K562 (cell line): ENCODE measurements at regions of chr2 and their contacts with region 1.

Region 1: DNA sequence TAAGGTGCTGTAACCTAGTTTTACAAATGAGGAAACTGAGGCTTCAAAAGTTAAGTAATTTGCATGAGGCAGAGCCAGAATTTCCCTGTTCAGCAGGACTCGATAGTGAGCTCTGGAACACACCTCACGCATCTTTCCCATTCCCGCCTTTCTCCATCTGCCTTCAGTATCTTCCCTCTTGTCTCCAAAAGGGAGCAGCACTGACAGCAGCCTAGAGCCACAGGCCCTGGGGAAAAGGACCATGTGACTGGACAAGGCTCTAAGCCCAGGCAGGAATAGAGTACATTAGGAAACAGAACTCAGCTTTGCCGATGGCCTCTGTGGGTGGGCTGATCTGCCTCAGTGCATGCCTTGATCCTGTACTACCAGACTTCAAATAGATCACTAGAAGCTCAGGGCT is 21.5 kb downstream of the GPR155 start:
- DNase-seq: peak in 2 of 4 experiments; percentile 14 to 15
- ATAC-seq: peak; percentile 67
- H3K4me3 ChIP-seq: no peak overlapping the region
- H3K27ac ChIP-seq: no peak overlapping the region
- H3K4me1 ChIP-seq: no peaks in the 10 kb centered on the region
- H3K27me3 ChIP-seq: peaks cover 8 to 9% of the 10 kb centered on the region in 2 experiments
- CTCF ChIP-seq: peak; percentile 12 to 32 (median 15); a peak in 1 of 6 replicates
- EP300 ChIP-seq: no peak
- POLR2A ChIP-seq: no peak
- RAD21 ChIP-seq: peak; percentile 35 to 61

Region 2: GRCh38 chr2:174522553-174522952 is 57.2 kb after region 1 on chr2:
- CTCF ChIA-PET with region 1: interaction called, 11 read pairs
- POLR2A ChIA-PET with region 1: no interaction called
- in situ Hi-C with region 1: no loop called
- intact Hi-C with region 1: loop called (anchors 1 kb)
- DNase-seq: no peak
- ATAC-seq: no peak
- H3K4me3 ChIP-seq: no peak overlapping the region
- H3K27ac ChIP-seq: no peak overlapping the region
- H3K4me1 ChIP-seq: no peaks in the 10 kb centered on the region
- H3K27me3 ChIP-seq: peaks cover 18 to 22% of the 10 kb centered on the region in 2 experiments; a peak in 4 of 5 replicates
- CTCF ChIP-seq: peak in 1 of 3 experiments; percentile 55; a peak in 3 of 6 replicates
- EP300 ChIP-seq: no peak
- POLR2A ChIP-seq: no peak
- RAD21 ChIP-seq: peak; percentile 58 to 75

Region 3: DNA sequence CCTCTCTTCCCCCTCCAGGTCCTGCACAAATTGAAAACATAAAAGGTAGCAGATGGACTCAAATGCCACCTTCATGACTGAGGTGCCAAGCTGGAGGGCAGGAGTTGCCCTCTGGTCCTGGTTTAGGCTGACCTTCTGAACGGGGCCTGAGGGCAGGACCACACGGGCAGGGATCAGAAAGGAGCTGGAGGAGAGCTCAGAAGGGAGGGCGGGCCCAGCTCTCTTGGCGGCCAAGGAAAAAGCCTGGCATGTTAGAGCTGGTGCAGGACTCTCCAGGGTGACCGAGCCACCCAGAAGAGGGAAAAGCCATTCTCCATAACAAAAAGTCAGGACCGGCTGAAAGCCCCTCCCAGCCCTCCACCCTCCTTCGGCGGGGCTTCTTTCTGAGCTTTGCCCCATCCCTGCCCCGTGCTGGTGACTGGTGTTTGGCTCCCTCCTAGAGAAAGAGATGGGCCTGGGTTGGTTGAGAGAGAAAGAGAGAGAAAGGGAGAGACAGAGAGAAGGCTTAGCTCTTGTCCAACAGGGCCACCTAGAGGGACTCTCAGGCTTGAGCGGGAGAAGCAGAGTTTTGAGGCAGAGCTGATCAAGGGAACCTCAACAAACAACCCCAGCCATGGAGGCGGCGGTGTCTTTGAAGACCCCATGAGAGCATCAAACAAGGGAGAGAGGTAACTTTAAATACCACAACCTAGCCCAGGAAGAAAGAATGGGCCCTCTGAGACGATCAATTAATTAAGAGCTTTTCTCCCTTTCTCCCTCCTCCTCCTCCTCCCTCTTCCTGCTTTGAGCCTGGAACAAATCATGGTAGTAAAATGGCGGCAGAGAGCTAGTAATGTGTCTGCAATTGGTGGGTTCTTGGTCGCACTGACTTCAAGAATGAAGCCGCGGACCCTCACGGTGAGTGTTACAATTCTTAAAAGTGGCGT is 81.5 kb after region 1 on chr2:
- CTCF ChIA-PET with region 1: interaction called, 32 read pairs
- POLR2A ChIA-PET with region 1: interaction called, 8 read pairs
- in situ Hi-C with region 1: no loop called
- intact Hi-C with region 1: loop called (anchors 1 kb)
- DNase-seq: peak; percentile 38 to 86 (median 59)
- ATAC-seq: peak; percentile 99
- H3K4me3 ChIP-seq: peak overlapping the region; percentile 47
- H3K27ac ChIP-seq: peak overlapping the region; percentile 59
- H3K4me1 ChIP-seq: peaks cover 0 to 3% of the 10 kb centered on the region in 2 experiments; a peak in 1 of 5 replicates
- H3K27me3 ChIP-seq: peaks cover 3 to 4% of the 10 kb centered on the region in 2 experiments; a peak in 1 of 5 replicates
- CTCF ChIP-seq: peak; percentile 88 to 97 (median 89)
- EP300 ChIP-seq: 0 out of 2 replicates have a peak, but pooled peaks have one; percentile 4
- POLR2A ChIP-seq: peak; percentile 66
- RAD21 ChIP-seq: peak; percentile 93 to 97

Region 4: DNA sequence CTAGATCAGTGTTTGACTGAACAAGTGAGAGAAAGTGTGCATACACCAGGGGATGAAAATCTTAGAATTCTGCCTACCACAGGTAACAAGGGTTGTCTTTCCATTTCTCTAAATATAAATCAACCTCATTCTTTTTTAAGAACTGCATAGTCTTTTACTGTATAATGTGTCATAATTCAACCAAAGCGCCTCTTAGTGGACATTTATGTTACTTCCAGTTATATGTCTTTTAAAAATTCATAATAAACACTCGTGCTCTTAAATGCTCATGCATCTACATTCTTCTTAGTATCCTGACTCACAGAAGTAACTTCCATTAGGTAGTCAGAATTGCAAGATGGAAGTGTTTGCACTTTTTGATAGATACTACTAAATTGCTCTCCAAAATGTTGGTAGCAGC is 222.8 kb after region 1 on chr2:
- CTCF ChIA-PET with region 1: interaction called, 10 read pairs
- POLR2A ChIA-PET with region 1: no interaction called
- in situ Hi-C with region 1: loop called (anchors 10 kb)
- intact Hi-C with region 1: loop called (anchors 1 kb)
- DNase-seq: peak in 1 of 4 experiments; percentile 37
- ATAC-seq: peak; percentile 70; the same call in 2 of the 3 replicates
- H3K4me3 ChIP-seq: no peak overlapping the region
- H3K27ac ChIP-seq: no peak overlapping the region
- H3K4me1 ChIP-seq: no peaks in the 10 kb centered on the region
- H3K27me3 ChIP-seq: peaks cover 11 to 19% of the 10 kb centered on the region in 2 experiments; a peak in 3 of 5 replicates
- CTCF ChIP-seq: peak; percentile 24 to 67 (median 44); a peak in 4 of 6 replicates
- EP300 ChIP-seq: no peak
- POLR2A ChIP-seq: no peak
- RAD21 ChIP-seq: peak; percentile 56 to 82

Region 5: GRCh38 chr2:174985630-174986029 is 520.3 kb after region 1 on chr2:
- CTCF ChIA-PET with region 1: interaction called, 3 read pairs
- POLR2A ChIA-PET with region 1: no interaction called
- in situ Hi-C with region 1: no loop called
- intact Hi-C with region 1: loop called (anchors 10 kb)
- DNase-seq: peak in 1 of 4 experiments; percentile 11
- ATAC-seq: no peak
- H3K4me3 ChIP-seq: no peak overlapping the region
- H3K27ac ChIP-seq: no peak overlapping the region
- H3K4me1 ChIP-seq: no peaks in the 10 kb centered on the region
- H3K27me3 ChIP-seq: no peaks in the 10 kb centered on the region
- CTCF ChIP-seq: peak in 2 of 3 experiments; percentile 42 to 63; a peak in 3 of 6 replicates
- EP300 ChIP-seq: no peak
- POLR2A ChIP-seq: no peak
- RAD21 ChIP-seq: peak; percentile 55 to 78